Spleen (tissue), 13 donors: ENCODE measurements at regions of chr14 and their contacts with region 1.

Region 1: GRCh38 chr14:93231129-93231979 is 24.3 kb downstream of the UBR7 start:
- DNase-seq: no peak
- H3K4me3 ChIP-seq: peak overlapping the region in 6 of 8 donors; percentile 0 to 62 (median 23)
- H3K27ac ChIP-seq: no peak overlapping the region
- H3K4me1 ChIP-seq: peaks cover 0 to 19% (median 0%) of the 10 kb centered on the region in 6 donors
- H3K27me3 ChIP-seq: peaks cover 0 to 7% (median 0%) of the 10 kb centered on the region in 7 donors
- CTCF ChIP-seq: no peak
- POLR2A ChIP-seq: no peak

Region 2: GRCh38 chr14:93543766-93544165 is 312.4 kb after region 1 on chr14:
- intact Hi-C with region 1: loop called (anchors 10 kb)
- DNase-seq: no peak
- H3K4me3 ChIP-seq: no peak overlapping the region
- H3K27ac ChIP-seq: no peak overlapping the region
- H3K4me1 ChIP-seq: peaks cover 0 to 12% (median 0%) of the 10 kb centered on the region in 6 donors
- H3K27me3 ChIP-seq: no peaks in the 10 kb centered on the region
- CTCF ChIP-seq: peak in 8 of 11 experiments; percentile 9 to 36 (median 27)
- POLR2A ChIP-seq: no peak